ENCODE measurements at regions of chr5 and their contacts with region 1.

Region 1: DNA sequence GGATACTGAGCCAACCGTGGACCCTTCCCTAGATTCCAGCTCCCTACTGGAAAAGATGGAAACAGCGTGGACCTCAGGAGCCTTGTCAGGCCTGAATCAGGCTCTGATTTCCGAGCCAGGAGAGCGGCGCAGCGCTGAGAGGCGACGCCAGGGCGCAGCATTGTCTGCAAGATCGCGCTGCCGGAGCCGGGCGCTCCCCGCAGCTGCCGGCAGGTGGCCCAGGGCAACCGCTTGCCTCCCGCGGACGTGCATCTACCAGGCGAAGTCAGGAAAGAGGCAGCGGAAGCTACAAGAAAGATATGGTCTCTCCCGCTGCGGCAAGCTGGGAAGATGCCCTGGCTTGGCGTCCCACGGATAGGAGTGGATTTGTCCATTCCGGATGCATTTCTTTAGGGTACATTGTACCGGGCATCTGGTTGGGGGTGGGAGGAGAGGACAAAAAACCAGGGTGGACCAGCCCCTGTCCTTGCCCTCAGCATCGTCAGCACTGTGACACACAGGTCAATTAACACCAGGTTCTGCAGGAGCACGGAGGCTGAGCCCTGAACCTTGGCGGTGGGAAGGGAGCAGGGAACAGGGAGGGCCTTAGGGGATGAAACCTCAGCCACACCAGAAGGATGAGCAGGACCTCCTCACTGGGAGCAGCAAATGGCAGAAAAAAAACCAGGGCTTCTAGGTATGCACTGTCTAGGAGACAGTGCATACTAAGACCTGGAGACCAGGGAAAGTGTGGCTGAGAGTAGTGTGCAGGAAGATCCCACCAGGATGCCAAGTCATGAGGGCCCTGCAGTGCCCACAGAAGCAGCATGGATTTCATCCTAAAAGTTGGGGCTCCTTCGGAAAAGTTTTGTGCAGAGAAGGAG is 55.9 kb downstream of the SFXN1 start:
- DNase-seq: peak; percentile 90
- ATAC-seq: peak; percentile 94
- H3K4me3 Mint-ChIP-seq: peak overlapping the region; percentile 57
- H3K27ac Mint-ChIP-seq: peak overlapping the region; percentile 67
- H3K4me1 Mint-ChIP-seq: peaks cover 59% of the 10 kb centered on the region
- H3K27me3 Mint-ChIP-seq: no peaks in the 10 kb centered on the region
- CTCF ChIP-seq: peak; percentile 100

Region 2: DNA sequence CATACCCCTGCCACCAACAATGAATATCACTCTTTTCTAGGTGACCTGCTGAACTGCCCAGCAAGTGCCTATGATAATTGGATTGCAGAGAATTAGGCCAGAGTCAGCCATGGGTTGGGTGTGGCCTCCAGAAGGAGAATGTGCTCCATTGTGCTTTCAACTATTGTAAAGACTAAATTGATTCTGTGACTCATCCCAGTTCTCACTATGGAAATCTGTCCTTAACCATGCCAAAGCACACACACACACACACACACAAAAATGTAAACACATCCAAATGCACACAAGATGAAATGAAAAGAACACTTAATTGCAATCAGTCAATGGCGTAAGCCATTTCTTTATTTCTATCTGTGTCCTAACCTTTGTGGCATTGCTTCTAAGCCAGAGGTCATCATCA is 116.0 kb before region 1 on chr5:
- CTCF ChIA-PET with region 1: no interaction called
- POLR2A ChIA-PET with region 1: no interaction called
- intact Hi-C with region 1: no loop called
- DNase-seq: no peak
- ATAC-seq: no peak
- H3K4me3 Mint-ChIP-seq: no peak overlapping the region
- H3K27ac Mint-ChIP-seq: no peak overlapping the region
- H3K4me1 Mint-ChIP-seq: no peaks in the 10 kb centered on the region
- H3K27me3 Mint-ChIP-seq: peaks cover 21% of the 10 kb centered on the region
- CTCF ChIP-seq: no peak

Region 3: DNA sequence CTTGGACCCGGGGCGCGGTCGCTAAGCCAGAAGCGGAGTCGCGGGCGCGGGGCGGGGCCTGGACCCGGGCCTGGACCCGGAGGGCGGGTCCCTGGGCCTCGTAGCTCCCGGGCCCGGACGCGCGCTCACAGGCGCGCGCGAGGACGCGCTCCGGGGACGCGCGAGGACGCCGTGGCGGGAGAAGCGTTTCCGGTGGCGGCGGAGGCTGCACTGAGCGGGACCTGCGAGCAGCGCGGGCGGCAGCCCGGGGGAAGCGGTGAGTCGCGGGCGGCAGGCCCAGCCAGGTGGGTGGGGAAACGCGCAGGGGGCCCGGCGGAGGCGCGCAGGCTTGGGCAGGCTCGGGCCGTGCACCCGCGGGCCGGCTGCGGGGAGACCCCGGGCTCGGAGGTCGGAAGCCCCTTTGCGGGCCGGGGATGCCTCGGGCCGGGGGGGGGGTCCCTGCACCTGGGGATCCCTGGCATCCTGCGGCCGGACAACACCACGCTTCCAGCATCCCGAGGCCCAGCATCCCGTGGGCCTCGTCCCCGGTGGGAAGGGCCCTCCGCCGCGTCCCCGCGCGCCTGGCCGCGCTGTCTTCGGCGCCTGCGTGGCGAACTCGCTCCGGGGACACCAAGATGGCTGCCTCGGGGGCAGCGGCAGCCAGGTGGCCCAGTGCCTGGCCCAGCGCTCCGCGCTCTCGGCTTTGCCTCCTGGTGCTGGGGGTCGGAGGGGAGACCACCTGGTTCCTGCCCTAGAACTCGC is 55.7 kb before region 1 on chr5 and contains the start of gene SFXN1:
- CTCF ChIA-PET with region 1: interaction called, 10 read pairs
- POLR2A ChIA-PET with region 1: interaction called, 4 read pairs
- intact Hi-C with region 1: no loop called
- DNase-seq: peak; percentile 84
- ATAC-seq: peak; percentile 75
- H3K4me3 Mint-ChIP-seq: peak within 1 kb of the TSS; percentile 88
- H3K27ac Mint-ChIP-seq: peak within 1 kb of the TSS; percentile 98
- H3K4me1 Mint-ChIP-seq: peaks cover 48% of the 10 kb centered on the region
- H3K27me3 Mint-ChIP-seq: no peaks in the 10 kb centered on the region
- CTCF ChIP-seq: no peak
- total RNA-seq, gene SFXN1: 476 to 491 TPM

Region 4: GRCh38 chr5:175566697-175567096 is 32.4 kb after region 1 on chr5:
- CTCF ChIA-PET with region 1: interaction called, 25 read pairs
- POLR2A ChIA-PET with region 1: no interaction called
- intact Hi-C with region 1: no loop called
- DNase-seq: no peak
- ATAC-seq: no peak
- H3K4me3 Mint-ChIP-seq: no peak overlapping the region
- H3K27ac Mint-ChIP-seq: no peak overlapping the region
- H3K4me1 Mint-ChIP-seq: peaks cover 10% of the 10 kb centered on the region
- H3K27me3 Mint-ChIP-seq: peaks cover 5% of the 10 kb centered on the region
- CTCF ChIP-seq: no peak

Region 5: DNA sequence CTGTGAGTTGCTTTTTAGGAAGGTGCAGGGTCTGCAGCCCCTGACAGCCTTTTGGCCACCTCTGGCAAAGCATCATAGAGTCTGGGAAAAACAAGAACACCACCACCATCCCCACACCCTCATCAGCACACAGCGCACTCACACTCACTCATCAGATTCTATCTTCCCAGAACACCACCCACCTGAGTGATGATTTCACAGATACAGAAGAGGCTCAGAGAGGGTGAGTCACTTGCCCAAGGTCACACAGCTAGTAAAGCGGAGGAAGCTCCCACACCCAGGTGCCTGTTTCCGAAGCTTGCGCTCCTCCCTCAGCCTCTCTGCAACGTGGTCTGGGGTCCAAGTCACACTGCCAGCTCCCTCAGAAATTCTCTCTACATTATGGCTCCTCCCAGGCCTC is 81.8 kb after region 1 on chr5:
- CTCF ChIA-PET with region 1: interaction called, 15 read pairs
- POLR2A ChIA-PET with region 1: interaction called, 3 read pairs
- intact Hi-C with region 1: no loop called
- DNase-seq: peak; percentile 15
- ATAC-seq: peak; percentile 69
- H3K4me3 Mint-ChIP-seq: no peak overlapping the region
- H3K27ac Mint-ChIP-seq: no peak overlapping the region
- H3K4me1 Mint-ChIP-seq: peaks cover 14% of the 10 kb centered on the region
- H3K27me3 Mint-ChIP-seq: no peaks in the 10 kb centered on the region
- CTCF ChIP-seq: no peak

Region 6: DNA sequence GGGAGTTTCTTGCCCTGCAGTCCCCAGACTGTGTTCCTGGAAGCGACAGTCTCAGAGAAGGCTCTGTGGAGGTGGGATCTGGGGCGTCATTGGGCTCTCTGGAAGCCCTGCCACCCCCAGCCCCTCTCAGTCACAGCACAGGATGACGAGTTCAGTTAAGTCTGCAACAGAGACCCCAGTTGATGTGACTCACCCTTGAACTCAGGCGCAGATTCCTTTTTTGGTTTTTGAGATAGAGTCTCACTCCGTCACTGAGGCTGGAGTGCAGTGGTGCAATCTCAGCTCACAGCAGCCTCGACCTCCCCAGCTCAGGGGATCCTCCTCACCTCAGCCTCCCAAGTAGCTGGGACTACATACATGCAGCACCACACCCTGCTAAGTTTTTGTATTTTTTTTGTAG is 131.9 kb after region 1 on chr5:
- CTCF ChIA-PET with region 1: interaction called, 105 read pairs
- POLR2A ChIA-PET with region 1: no interaction called
- intact Hi-C with region 1: no loop called
- DNase-seq: no peak
- ATAC-seq: no peak
- H3K4me3 Mint-ChIP-seq: no peak overlapping the region
- H3K27ac Mint-ChIP-seq: no peak overlapping the region
- H3K4me1 Mint-ChIP-seq: peaks cover 48% of the 10 kb centered on the region
- H3K27me3 Mint-ChIP-seq: no peaks in the 10 kb centered on the region
- CTCF ChIP-seq: no peak

Region 7: GRCh38 chr5:175718401-175719108 is 184.3 kb after region 1 on chr5:
- CTCF ChIA-PET with region 1: interaction called, 100 read pairs
- POLR2A ChIA-PET with region 1: interaction called, 6 read pairs
- intact Hi-C with region 1: loop called (anchors 2 kb)
- DNase-seq: peak; percentile 91
- ATAC-seq: peak; percentile 79
- H3K4me3 Mint-ChIP-seq: no peak overlapping the region
- H3K27ac Mint-ChIP-seq: no peak overlapping the region
- H3K4me1 Mint-ChIP-seq: peaks cover 5% of the 10 kb centered on the region
- H3K27me3 Mint-ChIP-seq: no peaks in the 10 kb centered on the region
- CTCF ChIP-seq: peak; percentile 84